Activated CD4-positive, alpha-beta T cell treated with anti-CD3 and anti-CD28 coated beads, Interleukin-2, amount 10 ng/mL, durations not matched to agents 7 days and 5 days (primary cell): ENCODE measurements at regions of chr17 and their contacts with region 1.

Region 1: DNA sequence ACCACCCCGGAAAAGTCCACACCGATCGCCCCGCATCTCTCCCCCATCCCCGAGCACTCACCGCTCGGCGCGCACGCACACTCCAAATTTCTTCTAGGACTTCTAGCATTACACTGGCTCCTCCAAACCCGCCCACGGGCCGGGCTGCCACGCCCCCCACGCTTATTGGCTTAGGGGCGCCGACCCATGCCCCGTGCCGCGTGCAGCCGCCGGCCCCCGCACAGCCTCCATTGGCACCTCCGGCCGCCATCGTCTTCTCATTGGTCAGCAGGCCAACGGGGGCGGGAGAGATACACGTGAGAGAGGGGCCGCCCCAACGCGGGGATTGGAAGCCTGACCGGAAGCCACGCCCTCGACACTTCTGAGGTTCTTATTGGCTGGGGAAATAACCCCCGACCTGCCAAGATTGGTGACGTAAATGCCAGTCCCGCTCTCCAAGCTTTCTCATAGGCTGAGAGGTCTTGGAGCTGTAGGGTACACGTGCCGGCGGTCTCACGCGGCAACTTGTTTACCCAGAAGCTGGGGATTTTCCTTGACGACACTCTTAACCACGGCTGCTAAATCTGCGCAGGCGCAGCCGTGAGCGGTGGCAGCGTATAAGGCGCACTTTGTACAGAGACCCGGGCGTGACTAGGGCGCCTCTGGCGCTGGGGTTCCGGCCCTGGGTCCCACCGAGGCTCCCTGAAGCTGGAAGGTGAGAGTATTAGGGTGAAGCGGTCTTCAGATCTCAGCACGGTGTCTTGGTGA is 4.2 kb upstream of the PER1 start:
- DNase-seq: peak; percentile 100
- H3K4me3 Mint-ChIP-seq: no peak overlapping the region
- H3K27ac Mint-ChIP-seq: no peak overlapping the region
- H3K4me1 Mint-ChIP-seq: peaks cover 51% of the 10 kb centered on the region
- H3K27me3 Mint-ChIP-seq: no peaks in the 10 kb centered on the region

Region 2: DNA sequence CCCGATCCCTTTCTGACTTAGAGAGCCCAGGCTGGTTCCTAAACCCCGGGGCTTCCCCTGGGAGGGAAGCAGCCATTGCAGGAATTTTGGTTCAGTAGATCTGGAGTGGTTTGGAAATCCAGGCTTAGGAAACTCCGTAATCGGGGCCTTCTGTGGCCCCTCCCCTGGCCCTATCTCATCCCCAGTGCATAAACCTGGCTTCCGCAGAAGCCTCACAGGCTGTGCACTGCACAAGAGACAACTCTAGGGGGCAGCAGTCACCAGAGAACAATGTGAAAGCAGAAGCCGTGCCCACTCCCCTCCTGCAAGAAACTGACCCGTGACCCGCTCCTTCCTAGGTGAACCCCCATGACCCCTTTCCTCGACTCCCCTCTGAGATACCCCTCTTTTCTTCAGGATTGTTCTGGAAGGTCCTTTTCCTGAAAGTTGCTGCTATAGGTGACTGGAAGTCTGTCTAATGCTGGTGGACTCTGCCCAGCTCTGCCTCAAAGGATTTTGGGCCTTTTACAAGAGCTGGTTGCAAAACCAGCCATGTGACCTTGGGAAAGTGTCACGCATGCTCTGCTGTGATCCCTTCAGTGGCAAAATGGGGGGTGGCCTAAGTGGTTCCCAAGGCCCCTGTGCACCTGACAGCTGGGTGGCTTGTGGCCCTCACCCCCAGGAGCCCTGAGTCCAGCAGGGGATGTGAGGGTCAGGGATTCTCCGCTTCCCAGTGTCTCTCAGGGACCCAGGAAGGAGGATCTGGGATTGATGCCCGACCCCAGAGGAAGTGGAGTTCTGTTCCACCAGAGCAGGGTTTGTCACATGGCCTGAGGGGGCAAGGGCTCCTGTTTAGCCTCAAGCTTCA is 139.6 kb before region 1 on chr17:
- CTCF ChIA-PET with region 1: no interaction called
- POLR2A ChIA-PET with region 1: no interaction called
- DNase-seq: peak; percentile 68
- H3K4me3 Mint-ChIP-seq: peak overlapping the region; percentile 66
- H3K27ac Mint-ChIP-seq: no peak overlapping the region
- H3K4me1 Mint-ChIP-seq: peaks cover 11% of the 10 kb centered on the region
- H3K27me3 Mint-ChIP-seq: peaks cover 21% of the 10 kb centered on the region

Region 3: GRCh38 chr17:8029135-8029534 is 127.3 kb before region 1 on chr17:
- CTCF ChIA-PET with region 1: no interaction called
- POLR2A ChIA-PET with region 1: no interaction called
- DNase-seq: no peak
- H3K4me3 Mint-ChIP-seq: no peak overlapping the region
- H3K27ac Mint-ChIP-seq: no peak overlapping the region
- H3K4me1 Mint-ChIP-seq: no peaks in the 10 kb centered on the region
- H3K27me3 Mint-ChIP-seq: peaks cover 45% of the 10 kb centered on the region

Region 4: GRCh38 chr17:8138672-8139371 is 17.6 kb before region 1 on chr17:
- CTCF ChIA-PET with region 1: interaction called, 68 read pairs
- POLR2A ChIA-PET with region 1: interaction called, 5 read pairs
- DNase-seq: peak; percentile 96
- H3K4me3 Mint-ChIP-seq: no peak overlapping the region
- H3K27ac Mint-ChIP-seq: no peak overlapping the region
- H3K4me1 Mint-ChIP-seq: peaks cover 2% of the 10 kb centered on the region
- H3K27me3 Mint-ChIP-seq: peaks cover 5% of the 10 kb centered on the region

Region 5: GRCh38 chr17:8173056-8173870 is 16.8 kb after region 1 on chr17:
- CTCF ChIA-PET with region 1: interaction called, 7 read pairs
- POLR2A ChIA-PET with region 1: interaction called, 16 read pairs
- DNase-seq: peak; percentile 88
- H3K4me3 Mint-ChIP-seq: peak overlapping the region; percentile 95
- H3K27ac Mint-ChIP-seq: peak overlapping the region; percentile 100
- H3K4me1 Mint-ChIP-seq: peaks cover 58% of the 10 kb centered on the region
- H3K27me3 Mint-ChIP-seq: no peaks in the 10 kb centered on the region

Region 6: DNA sequence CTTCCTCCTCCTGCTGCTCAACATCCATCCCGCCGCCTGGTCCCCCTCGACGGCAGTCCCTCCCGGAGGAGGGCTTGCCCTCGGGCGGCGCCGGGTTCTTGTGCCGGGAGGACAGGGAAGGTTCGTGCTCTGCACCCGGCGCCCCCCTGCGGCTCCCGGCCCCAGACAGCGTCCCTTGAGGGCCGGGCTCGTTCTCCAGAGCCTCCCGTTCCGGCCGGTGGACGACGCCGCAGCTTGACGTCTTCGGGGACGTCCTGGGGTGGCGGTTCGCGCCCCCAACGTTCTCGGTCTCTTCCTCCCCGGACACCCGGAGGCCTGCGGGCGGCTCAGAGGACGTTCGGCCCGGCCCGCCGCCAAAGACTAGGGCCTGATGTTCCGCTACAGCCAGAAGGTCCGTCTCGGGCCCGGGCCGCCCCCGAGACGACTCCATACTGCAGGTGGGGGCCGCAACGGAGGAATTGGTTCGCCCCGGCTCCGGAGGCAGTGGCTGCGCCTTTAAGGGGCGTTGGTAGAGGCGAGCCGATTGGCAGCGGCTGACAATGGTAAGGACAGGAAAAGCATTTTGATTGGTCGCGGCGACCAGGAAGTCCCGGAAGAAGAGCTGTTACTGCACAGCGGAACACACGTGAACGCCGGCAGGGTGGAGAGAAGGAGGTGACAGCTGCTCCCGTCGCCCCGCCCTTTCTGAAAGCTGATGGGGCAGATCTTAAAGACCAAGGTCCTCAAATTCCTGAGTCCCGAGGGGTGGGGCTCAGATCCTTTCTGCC is 33.5 kb after region 1 on chr17 and contains the start of gene BORCS6:
- CTCF ChIA-PET with region 1: interaction called, 13 read pairs
- POLR2A ChIA-PET with region 1: interaction called, 3 read pairs
- DNase-seq: peak; percentile 97
- H3K4me3 Mint-ChIP-seq: no peak within 1 kb of the TSS
- H3K27ac Mint-ChIP-seq: peak within 1 kb of the TSS; percentile 42
- H3K4me1 Mint-ChIP-seq: peaks cover 11% of the 10 kb centered on the region
- H3K27me3 Mint-ChIP-seq: no peaks in the 10 kb centered on the region
- total RNA-seq, gene BORCS6: 12.2 to 12.9 TPM